Ascending aorta (tissue), 2 donors: ENCODE measurements at regions of chr6 and their contacts with region 1.

Region 1: GRCh38 chr6:100664274-100665040 is 199.7 kb upstream of the SIM1 start:
- DNase-seq: no peak
- H3K4me3 ChIP-seq: no peak overlapping the region
- H3K27ac ChIP-seq: no peak overlapping the region
- H3K4me1 ChIP-seq: no peaks in the 10 kb centered on the region
- H3K27me3 ChIP-seq: no peaks in the 10 kb centered on the region
- CTCF ChIP-seq: peak; percentile 42 to 68 (median 59)

Region 2: GRCh38 chr6:100116411-100117194 is 547.9 kb before region 1 on chr6:
- intact Hi-C with region 1: loop called (anchors 2 kb)
- DNase-seq: no peak
- H3K4me3 ChIP-seq: no peak overlapping the region
- H3K27ac ChIP-seq: no peak overlapping the region
- H3K4me1 ChIP-seq: no peaks in the 10 kb centered on the region
- H3K27me3 ChIP-seq: no peaks in the 10 kb centered on the region
- CTCF ChIP-seq: peak; percentile 23 to 65 (median 48)

Region 3: GRCh38 chr6:100479179-100480035 is 185.1 kb before region 1 on chr6:
- intact Hi-C with region 1: loop called (anchors 10 kb)
- DNase-seq: no peak
- H3K4me3 ChIP-seq: no peak overlapping the region
- H3K27ac ChIP-seq: no peak overlapping the region
- H3K4me1 ChIP-seq: no peaks in the 10 kb centered on the region
- H3K27me3 ChIP-seq: no peaks in the 10 kb centered on the region
- CTCF ChIP-seq: peak; percentile 38 to 71 (median 57)

Region 4: DNA sequence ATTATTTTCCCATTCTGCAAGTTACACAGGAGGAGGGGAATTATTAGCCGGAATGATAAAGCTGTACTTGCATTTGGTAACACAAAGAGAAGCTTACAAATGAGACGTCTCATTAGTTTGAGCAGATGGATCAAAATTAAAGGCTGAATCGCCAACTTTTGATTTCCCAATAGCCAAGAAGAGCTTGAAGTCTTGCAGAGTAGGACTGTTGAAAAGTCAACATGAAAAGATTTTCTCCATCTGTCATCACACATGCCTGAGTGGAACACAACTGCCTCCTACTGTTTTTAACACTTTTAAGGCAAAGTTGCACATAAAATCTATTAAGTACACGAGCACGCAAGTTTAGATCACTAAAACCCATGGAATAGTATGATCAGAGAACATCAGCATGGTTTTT is 40.5 kb after region 1 on chr6:
- intact Hi-C with region 1: no loop called
- DNase-seq: no peak
- H3K4me3 ChIP-seq: no peak overlapping the region
- H3K27ac ChIP-seq: no peak overlapping the region
- H3K4me1 ChIP-seq: no peaks in the 10 kb centered on the region
- H3K27me3 ChIP-seq: no peaks in the 10 kb centered on the region
- CTCF ChIP-seq: no peak